ENCODE measurements at regions of chr9 and their contacts with region 1.

Region 1: GRCh38 chr9:122252796-122253195 is 11.8 kb downstream of the RBM18 start:
- DNase-seq: peak in 4 of 5 donors; percentile 34 to 64 (median 48)
- ATAC-seq: peak in 3 of 4 donors; percentile 56 to 93 (median 60)
- H3K4me3 ChIP-seq: no peak overlapping the region
- H3K27ac ChIP-seq: peak overlapping the region in 11 of 12 donors; percentile 18 to 78 (median 53)
- H3K4me1 ChIP-seq: peaks cover 0 to 38% (median 18%) of the 10 kb centered on the region in 12 donors
- H3K27me3 ChIP-seq: no peaks in the 10 kb centered on the region
- CTCF ChIP-seq: no peak
- POLR2A ChIP-seq: no peak

Region 2: DNA sequence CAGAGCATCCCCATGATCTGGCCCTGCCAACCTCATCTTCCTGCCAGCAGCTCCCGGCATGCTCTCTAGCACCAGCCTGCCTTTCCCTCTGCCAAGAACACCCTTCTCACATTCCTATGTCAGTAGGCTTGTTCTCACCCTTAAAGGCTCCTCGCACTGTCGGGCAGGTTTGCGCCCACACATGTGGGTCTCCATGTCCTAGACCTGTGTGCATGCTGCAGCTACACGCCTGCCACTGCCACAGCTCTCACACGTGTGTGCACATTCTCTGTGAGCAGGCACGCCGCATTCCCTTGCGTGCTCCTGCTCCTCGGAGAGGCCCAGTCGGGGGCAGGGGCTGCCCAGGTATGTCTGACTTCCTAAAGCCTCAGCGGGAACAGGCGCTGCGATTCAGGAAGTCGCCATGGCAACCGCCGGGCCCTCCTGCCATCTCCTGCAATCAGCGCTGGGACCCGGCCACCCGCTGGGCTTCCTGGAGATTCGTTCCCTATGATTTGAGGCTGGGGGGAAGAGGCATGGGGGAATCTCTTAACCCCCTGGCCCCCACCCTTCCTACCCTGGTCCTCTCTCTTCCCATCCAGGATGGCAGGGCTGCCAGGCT is 121.3 kb before region 1 on chr9:
- intact Hi-C with region 1: loop called in 2 of 10 experiments (anchors 5 to 10 kb)
- DNase-seq: peak in 4 of 5 donors; percentile 51 to 68 (median 53)
- ATAC-seq: peak; percentile 62 to 77 (median 68)
- H3K4me3 ChIP-seq: no peak overlapping the region
- H3K27ac ChIP-seq: peak overlapping the region in 1 of 12 donors; percentile 10
- H3K4me1 ChIP-seq: peaks cover 0 to 66% (median 37%) of the 10 kb centered on the region in 12 donors
- H3K27me3 ChIP-seq: peaks cover 0 to 13% (median 0%) of the 10 kb centered on the region in 9 donors
- CTCF ChIP-seq: no peak
- POLR2A ChIP-seq: no peak

Region 3: GRCh38 chr9:122144836-122145591 is 107.8 kb before region 1 on chr9:
- intact Hi-C with region 1: loop called in 1 of 10 experiments (anchors 10 kb)
- DNase-seq: no peak
- ATAC-seq: peak in 1 of 4 donors; percentile 59
- H3K4me3 ChIP-seq: no peak overlapping the region
- H3K27ac ChIP-seq: peak overlapping the region in 2 of 12 donors; percentile 38 to 56
- H3K4me1 ChIP-seq: peaks cover 7 to 51% (median 25%) of the 10 kb centered on the region in 12 donors
- H3K27me3 ChIP-seq: no peaks in the 10 kb centered on the region
- CTCF ChIP-seq: peak; percentile 12 to 58 (median 36)
- POLR2A ChIP-seq: no peak

Region 4: GRCh38 chr9:122159026-122159924 is 93.5 kb before region 1 on chr9 and contains the starts of genes MORN5 and NDUFA8:
- intact Hi-C with region 1: loop called in 1 of 10 experiments (anchors 5 kb)
- DNase-seq: peak; percentile 95 to 98 (median 97)
- ATAC-seq: peak; percentile 96 to 99 (median 97)
- H3K4me3 ChIP-seq: peak within 1 kb of the TSS; percentile 71 to 98 (median 89)
- H3K27ac ChIP-seq: peak within 1 kb of the TSS; percentile 90 to 98 (median 96)
- H3K4me1 ChIP-seq: peaks cover 4 to 48% (median 34%) of the 10 kb centered on the region in 12 donors
- H3K27me3 ChIP-seq: no peaks in the 10 kb centered on the region
- CTCF ChIP-seq: peak in 3 of 12 donors; percentile 7 to 10 (median 8)
- POLR2A ChIP-seq: peak; percentile 93 to 94
- total RNA-seq, gene MORN5: not detected
- total RNA-seq, gene NDUFA8: 183 to 316 (median 260) TPM

Region 5: GRCh38 chr9:122172131-122172530 is 80.7 kb before region 1 on chr9:
- intact Hi-C with region 1: no loop called
- DNase-seq: no peak
- ATAC-seq: no peak
- H3K4me3 ChIP-seq: no peak overlapping the region
- H3K27ac ChIP-seq: no peak overlapping the region
- H3K4me1 ChIP-seq: no peaks in the 10 kb centered on the region
- H3K27me3 ChIP-seq: peaks cover 0 to 16% (median 0%) of the 10 kb centered on the region in 9 donors
- CTCF ChIP-seq: no peak
- POLR2A ChIP-seq: no peak

Measured in heart left ventricle (tissue), 16 donors.